Activated CD8-positive, alpha-beta T cell treated with anti-CD3 and anti-CD28 coated beads for 36 hours (primary cell): ENCODE measurements at regions of chr7 and their contacts with region 1.

Region 1: GRCh38 chr7:21352540-21353387 is 75.1 kb upstream of the SP4 start:
- DNase-seq: peak; percentile 39
- ATAC-seq: peak; percentile 80
- H3K4me3 Mint-ChIP-seq: peak overlapping the region; percentile 62
- H3K27ac Mint-ChIP-seq: peak overlapping the region; percentile 94
- H3K4me1 Mint-ChIP-seq: peaks cover 55% of the 10 kb centered on the region
- H3K27me3 Mint-ChIP-seq: no peaks in the 10 kb centered on the region
- CTCF ChIP-seq: no peak

Region 2: DNA sequence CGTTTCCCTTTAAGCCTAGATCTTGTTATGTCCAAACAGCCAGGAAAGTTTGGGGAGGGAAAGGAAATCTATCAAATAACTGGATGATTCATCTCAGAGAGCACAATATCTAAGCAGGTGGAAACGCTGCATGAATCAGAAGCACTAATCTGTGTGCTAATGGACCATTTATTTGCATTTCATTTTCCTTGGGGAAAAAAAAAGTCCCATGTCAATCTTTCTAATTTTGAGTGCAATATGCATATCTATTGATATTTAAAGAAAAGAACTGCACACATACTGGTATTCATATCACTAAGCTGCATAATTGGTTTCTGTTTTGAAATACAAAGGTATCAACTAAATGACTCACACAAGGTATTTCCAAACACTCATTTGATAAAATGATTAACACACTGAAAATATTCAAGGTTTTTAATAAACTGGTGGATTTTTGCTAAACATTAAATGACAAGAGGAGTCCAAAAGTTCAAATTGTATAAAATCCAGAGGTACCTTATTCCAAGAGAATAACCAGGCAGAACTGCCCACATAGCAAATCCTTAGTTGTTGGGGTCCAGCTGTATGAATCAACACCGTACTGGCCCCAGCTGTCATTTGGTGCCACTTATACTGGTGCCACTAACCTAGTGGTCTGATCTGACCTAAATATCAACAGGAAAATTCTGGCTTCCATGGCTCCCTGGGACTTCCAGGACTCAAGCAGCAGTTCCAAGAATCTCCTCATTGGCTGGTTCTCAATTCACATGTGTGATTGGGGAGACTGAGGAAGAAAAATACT is 47.1 kb before region 1 on chr7:
- CTCF ChIA-PET with region 1: interaction called, 3 read pairs
- POLR2A ChIA-PET with region 1: interaction called, 3 read pairs
- intact Hi-C with region 1: loop called (anchors 5 kb)
- DNase-seq: no peak
- ATAC-seq: peak; percentile 85
- H3K4me3 Mint-ChIP-seq: no peak overlapping the region
- H3K27ac Mint-ChIP-seq: peak overlapping the region; percentile 48
- H3K4me1 Mint-ChIP-seq: peaks cover 25% of the 10 kb centered on the region
- H3K27me3 Mint-ChIP-seq: no peaks in the 10 kb centered on the region
- CTCF ChIP-seq: no peak

Region 3: DNA sequence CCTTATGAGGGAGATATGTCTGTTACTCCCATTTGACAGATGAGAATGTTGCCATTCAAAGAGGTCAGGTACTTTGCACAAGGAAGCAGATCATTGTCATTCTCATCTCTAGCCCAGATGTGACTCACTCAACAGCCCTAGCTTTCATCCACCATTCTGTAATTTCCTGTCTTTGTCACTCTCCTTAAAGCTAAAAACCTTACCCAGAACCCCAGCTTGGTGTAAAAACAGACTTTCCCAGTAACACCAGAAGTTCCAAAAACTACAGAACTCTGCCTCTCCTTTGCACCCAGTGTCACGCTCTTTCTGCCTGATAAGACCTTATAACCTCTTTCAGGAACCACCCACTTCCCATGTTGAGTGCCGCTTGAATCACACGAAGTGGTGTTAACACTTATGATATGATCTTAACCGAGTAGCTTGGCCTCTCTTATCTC is 14.0 kb before region 1 on chr7:
- CTCF ChIA-PET with region 1: interaction called, 13 read pairs
- POLR2A ChIA-PET with region 1: interaction called, 14 read pairs
- intact Hi-C with region 1: loop called (anchors 2 kb)
- DNase-seq: peak; percentile 86
- ATAC-seq: peak; percentile 93
- H3K4me3 Mint-ChIP-seq: peak overlapping the region; percentile 22
- H3K27ac Mint-ChIP-seq: peak overlapping the region; percentile 95
- H3K4me1 Mint-ChIP-seq: peaks cover 47% of the 10 kb centered on the region
- H3K27me3 Mint-ChIP-seq: no peaks in the 10 kb centered on the region
- CTCF ChIP-seq: no peak

Region 4: GRCh38 chr7:21401944-21402343 is 49.2 kb after region 1 on chr7:
- CTCF ChIA-PET with region 1: no interaction called
- POLR2A ChIA-PET with region 1: no interaction called
- intact Hi-C with region 1: no loop called
- DNase-seq: no peak
- ATAC-seq: no peak
- H3K4me3 Mint-ChIP-seq: no peak overlapping the region
- H3K27ac Mint-ChIP-seq: no peak overlapping the region
- H3K4me1 Mint-ChIP-seq: no peaks in the 10 kb centered on the region
- H3K27me3 Mint-ChIP-seq: no peaks in the 10 kb centered on the region
- CTCF ChIP-seq: no peak

Region 5: GRCh38 chr7:21427182-21427870 is 74.6 kb after region 1 on chr7:
- CTCF ChIA-PET with region 1: interaction called, 4 read pairs
- POLR2A ChIA-PET with region 1: interaction called, 5 read pairs
- intact Hi-C with region 1: loop called (anchors 5 kb)
- DNase-seq: peak; percentile 99
- ATAC-seq: peak; percentile 81
- H3K4me3 Mint-ChIP-seq: peak overlapping the region; percentile 99
- H3K27ac Mint-ChIP-seq: peak overlapping the region; percentile 98
- H3K4me1 Mint-ChIP-seq: peaks cover 34% of the 10 kb centered on the region
- H3K27me3 Mint-ChIP-seq: no peaks in the 10 kb centered on the region
- CTCF ChIP-seq: no peak

Region 6: DNA sequence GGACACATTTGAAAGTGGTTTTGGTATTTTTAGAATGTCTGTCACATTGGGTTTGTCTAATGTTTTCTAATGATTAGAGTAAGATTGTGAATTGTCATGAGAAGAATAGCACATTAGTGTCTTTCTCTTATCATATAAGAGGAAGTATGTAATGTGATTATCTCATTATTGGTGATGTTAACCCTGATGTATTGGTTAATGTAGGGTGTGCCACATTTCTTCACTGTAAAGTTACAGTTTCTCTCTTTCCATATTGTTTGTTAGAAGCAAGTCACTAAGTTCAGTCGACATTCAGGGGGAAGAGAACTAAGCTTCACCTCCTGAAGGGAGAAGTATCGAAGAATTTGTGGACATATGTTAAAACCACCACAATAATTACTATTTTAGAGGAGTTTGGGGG is 133.7 kb after region 1 on chr7:
- CTCF ChIA-PET with region 1: no interaction called
- POLR2A ChIA-PET with region 1: no interaction called
- intact Hi-C with region 1: no loop called
- DNase-seq: no peak
- ATAC-seq: no peak
- H3K4me3 Mint-ChIP-seq: no peak overlapping the region
- H3K27ac Mint-ChIP-seq: no peak overlapping the region
- H3K4me1 Mint-ChIP-seq: peaks cover 18% of the 10 kb centered on the region
- H3K27me3 Mint-ChIP-seq: no peaks in the 10 kb centered on the region
- CTCF ChIP-seq: no peak